Esophagus muscularis mucosa (tissue), 4 donors: ENCODE measurements at regions of chr19 and their contacts with region 1.

Region 1: DNA sequence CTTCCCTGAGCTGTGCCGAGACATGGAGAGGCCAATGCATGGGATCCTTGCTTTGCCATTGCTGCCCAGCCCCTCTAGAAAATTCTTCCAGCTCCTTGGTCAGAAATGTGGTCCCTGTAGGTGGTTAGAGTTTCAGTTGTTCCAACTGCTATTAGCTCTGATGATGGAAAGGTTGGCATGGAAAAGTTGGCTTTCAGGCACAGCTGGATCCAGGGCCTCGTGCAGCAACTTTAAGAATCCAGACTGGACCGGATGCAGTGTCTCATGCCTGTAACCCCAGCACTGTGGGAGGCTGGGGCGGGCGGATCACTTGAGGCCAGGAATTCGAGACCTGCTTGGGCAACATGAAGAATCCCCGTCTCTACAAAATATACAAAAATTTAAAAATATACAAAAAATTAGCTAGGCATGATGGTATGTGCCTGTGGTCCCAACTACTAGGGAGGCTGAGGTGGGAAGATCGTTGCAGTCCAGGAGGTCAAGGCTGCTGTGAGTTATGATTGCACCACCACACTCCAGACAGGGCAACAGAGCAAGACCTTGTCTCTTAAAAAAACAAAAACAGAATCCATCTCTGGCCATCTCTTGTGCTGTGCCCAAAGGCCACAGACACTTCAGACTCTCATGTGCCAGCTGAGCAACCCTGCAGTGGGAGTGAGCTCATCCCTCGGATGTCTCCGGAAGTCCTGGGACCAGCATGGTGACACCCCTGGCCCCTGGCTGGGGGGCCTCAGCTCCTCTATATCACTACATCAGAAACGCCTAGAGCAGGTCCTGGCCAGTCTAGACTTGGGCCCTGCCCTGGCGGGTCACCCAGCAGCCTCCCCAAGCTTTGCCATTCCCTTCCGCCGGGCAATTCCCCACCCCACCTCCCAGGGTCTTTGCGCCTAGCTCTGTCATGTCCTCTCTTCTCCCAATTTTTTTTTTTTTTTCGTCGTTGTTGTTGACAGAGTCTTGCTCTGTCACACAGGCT is 16.8 kb downstream of the MEX3D start:
- DNase-seq: no peak
- H3K4me3 ChIP-seq: no peak overlapping the region
- H3K27ac ChIP-seq: no peak overlapping the region
- H3K4me1 ChIP-seq: peaks cover 0 to 4% (median 1%) of the 10 kb centered on the region in 4 donors
- H3K27me3 ChIP-seq: peaks cover 0 to 8% (median under 1%) of the 10 kb centered on the region in 4 donors
- CTCF ChIP-seq: no peak
- EP300 ChIP-seq: no peak
- POLR2A ChIP-seq: no peak

Region 2: GRCh38 chr19:1478934-1479707 is 72.2 kb before region 1 on chr19 and contains the start of gene C19orf25:
- intact Hi-C with region 1: no loop called
- DNase-seq: peak; percentile 97
- H3K4me3 ChIP-seq: peak within 1 kb of the TSS; percentile 80 to 98 (median 94)
- H3K27ac ChIP-seq: peak within 1 kb of the TSS; percentile 71 to 79 (median 74)
- H3K4me1 ChIP-seq: peaks cover 17 to 40% (median 33%) of the 10 kb centered on the region in 4 donors
- H3K27me3 ChIP-seq: peaks cover 0 to 16% (median 0%) of the 10 kb centered on the region in 4 donors
- CTCF ChIP-seq: no peak
- EP300 ChIP-seq: no peak
- POLR2A ChIP-seq: no peak
- total RNA-seq, gene C19orf25: 21.6 to 43.6 (median 29.8) TPM

Region 3: DNA sequence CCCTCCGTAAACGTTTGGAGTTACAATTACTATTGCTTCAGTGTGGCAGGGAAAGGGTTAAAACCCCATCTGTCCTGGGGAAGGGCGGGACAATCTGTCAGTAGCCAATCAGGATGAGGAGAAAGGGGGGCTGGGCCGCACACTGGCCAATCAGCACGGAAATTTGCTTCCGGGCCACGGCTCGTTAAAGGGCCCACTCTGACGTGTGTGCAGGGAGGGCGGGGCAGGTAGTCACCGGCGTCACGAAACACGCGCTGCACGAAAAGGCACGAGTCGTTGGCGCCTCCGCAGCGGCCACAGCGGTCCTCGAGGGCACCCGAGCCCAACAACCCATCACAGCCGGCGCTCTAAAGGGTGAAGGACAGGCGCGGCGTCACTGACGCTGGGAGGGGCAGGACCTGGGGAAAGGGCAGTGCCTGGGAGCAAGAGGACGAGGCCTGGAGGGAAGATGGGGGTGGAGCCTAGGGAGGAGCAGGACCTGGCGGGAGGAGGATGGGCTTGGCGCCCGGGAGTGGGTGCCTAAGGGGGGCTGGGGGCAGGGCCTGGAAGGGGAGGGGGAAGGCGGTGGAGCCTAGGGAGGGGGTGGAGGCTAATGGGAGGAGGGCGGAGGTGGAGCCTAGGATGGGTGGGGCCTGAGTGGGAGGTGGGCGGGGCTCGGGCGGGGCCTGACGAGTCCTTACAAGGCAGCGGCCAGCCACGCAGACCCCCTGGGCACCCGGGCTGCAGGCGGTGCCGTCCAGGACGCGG is 43.4 kb before region 1 on chr19:
- intact Hi-C with region 1: no loop called
- DNase-seq: peak; percentile 98
- H3K4me3 ChIP-seq: peak overlapping the region; percentile 49 to 60 (median 50)
- H3K27ac ChIP-seq: peak overlapping the region; percentile 78 to 88 (median 82)
- H3K4me1 ChIP-seq: peaks cover 18 to 56% (median 42%) of the 10 kb centered on the region in 4 donors
- H3K27me3 ChIP-seq: peaks cover 4 to 76% (median 21%) of the 10 kb centered on the region in 4 donors
- CTCF ChIP-seq: peak in 1 of 3 experiments; percentile 17
- EP300 ChIP-seq: no peak
- POLR2A ChIP-seq: no peak

Region 4: DNA sequence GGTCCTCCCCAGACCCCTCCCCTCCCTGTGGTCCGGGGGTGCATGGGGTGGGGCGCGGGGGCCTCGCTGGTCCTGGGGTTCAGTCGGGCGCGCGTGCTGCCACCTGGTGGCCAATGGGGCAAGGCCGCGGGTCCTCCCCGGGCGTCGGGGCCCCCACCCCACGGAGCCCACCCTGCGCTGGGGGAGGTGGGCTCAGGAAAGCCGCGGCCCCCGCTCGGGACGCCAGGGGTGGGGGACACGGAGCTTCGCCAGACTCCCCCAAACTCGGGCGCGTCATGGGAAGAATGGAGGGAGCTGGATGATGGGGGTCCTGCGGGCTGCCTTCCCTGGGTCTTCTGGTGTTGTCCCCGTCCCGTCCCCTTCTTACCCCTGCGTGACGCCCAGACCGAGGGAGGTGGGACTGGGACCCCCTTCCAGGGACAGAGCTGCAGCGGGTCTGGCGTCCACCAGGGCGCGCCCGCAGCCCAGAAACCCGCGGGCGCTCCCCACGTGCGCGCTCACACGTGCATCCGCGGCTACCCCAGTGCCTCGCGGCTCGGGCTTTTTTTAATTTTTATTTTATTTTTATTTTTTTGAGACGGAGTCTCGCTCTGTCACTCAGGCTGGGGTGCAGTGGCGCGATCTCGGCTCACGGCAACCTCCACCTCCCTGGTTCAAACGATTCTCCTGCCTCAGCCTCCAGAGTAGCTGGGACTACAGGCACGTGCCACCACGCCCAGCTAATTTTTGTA is 120.8 kb after region 1 on chr19:
- intact Hi-C with region 1: loop called (anchors 2 kb)
- DNase-seq: no peak
- H3K4me3 ChIP-seq: peak overlapping the region; percentile 0 to 38 (median 25)
- H3K27ac ChIP-seq: no peak overlapping the region
- H3K4me1 ChIP-seq: peaks cover 8 to 41% (median 31%) of the 10 kb centered on the region in 4 donors
- H3K27me3 ChIP-seq: peaks cover 7 to 100% (median 80%) of the 10 kb centered on the region in 4 donors
- CTCF ChIP-seq: peak; percentile 48 to 88 (median 83)
- EP300 ChIP-seq: no peak
- POLR2A ChIP-seq: no peak

Region 5: DNA sequence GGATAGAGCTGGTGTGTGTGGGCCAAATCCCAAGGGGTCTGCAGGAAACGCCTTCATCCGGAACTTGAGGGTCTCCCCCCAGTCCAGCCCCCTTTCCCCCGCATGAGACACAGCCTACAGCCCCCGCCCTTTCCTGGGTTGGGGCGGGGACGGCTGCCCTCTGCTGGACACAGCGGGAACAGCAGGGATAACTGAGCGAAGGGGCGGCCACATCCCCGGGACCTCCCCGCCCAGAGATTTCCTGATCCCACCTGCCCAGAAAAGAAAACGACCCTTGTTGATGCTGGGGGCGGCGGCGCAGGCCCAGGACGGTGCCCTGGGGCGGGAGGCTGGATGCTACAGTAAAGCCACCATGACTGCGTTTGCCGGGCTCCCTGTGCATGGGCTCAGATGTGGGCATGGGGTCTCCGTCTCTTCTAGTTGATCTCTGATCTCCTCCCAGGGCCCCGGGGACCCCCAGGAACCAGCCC is 216.1 kb after region 1 on chr19:
- intact Hi-C with region 1: loop called (anchors 2 kb)
- DNase-seq: no peak
- H3K4me3 ChIP-seq: no peak overlapping the region
- H3K27ac ChIP-seq: no peak overlapping the region
- H3K4me1 ChIP-seq: peaks cover 4 to 8% (median 5%) of the 10 kb centered on the region in 4 donors
- H3K27me3 ChIP-seq: peaks cover 10 to 98% (median 82%) of the 10 kb centered on the region in 4 donors
- CTCF ChIP-seq: peak; percentile 81 to 98 (median 91)
- EP300 ChIP-seq: no peak
- POLR2A ChIP-seq: no peak

Region 6: DNA sequence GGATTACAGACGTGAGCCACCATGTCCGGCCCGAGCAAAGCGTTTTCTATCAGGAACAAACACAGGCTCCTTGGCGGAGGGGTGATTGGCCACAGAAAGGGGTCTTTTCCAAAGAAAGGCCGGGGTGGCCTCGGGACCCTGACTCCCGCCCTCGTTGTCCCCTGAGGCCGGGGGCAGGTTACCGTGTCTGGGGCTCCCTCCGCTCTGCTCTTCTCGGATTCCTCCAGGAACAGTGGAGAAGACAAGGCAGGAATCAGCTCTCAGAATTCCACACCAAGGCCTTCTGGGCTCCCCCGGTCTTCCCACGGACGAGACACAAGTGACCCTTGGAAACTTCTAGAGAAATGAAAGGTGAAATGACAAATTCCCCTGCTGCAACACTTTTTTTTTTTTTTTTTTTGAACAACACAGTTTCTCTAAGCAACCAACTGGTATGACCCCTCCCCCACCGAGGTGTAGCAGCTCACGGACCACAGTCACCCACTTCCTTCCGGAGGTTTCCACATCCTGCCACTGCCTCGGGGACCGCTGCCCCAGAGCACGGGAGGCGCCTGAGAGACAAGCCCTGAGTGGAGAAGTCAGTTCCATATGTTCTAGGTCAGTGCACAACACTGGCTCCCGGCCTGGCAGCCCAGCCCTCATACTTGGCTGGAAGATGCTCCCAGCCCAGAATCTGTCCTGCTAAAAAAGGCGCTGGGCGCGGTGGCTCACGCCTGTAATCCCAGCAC is 533.8 kb after region 1 on chr19:
- intact Hi-C with region 1: no loop called
- DNase-seq: no peak
- H3K4me3 ChIP-seq: peak overlapping the region in 2 of 4 donors; percentile 12 to 40
- H3K27ac ChIP-seq: peak overlapping the region; percentile 48 to 67 (median 54)
- H3K4me1 ChIP-seq: peaks cover 23 to 97% (median 86%) of the 10 kb centered on the region in 4 donors
- H3K27me3 ChIP-seq: no peaks in the 10 kb centered on the region
- CTCF ChIP-seq: no peak
- EP300 ChIP-seq: no peak
- POLR2A ChIP-seq: no peak